Ovary (tissue), 10 donors: ENCODE measurements at regions of chr6 and their contacts with region 1.

Region 1: GRCh38 chr6:41424370-41425058 is 89.1 kb downstream of the NCR2 start:
- DNase-seq: peak; percentile 71 to 89 (median 85)
- H3K4me3 ChIP-seq: no peak overlapping the region
- H3K27ac ChIP-seq: no peak overlapping the region
- H3K4me1 ChIP-seq: peaks cover 14% of the 10 kb centered on the region
- H3K27me3 ChIP-seq: no peaks in the 10 kb centered on the region
- CTCF ChIP-seq: peak; percentile 61 to 74 (median 66)
- EP300 ChIP-seq: no peak
- POLR2A ChIP-seq: no peak

Region 2: DNA sequence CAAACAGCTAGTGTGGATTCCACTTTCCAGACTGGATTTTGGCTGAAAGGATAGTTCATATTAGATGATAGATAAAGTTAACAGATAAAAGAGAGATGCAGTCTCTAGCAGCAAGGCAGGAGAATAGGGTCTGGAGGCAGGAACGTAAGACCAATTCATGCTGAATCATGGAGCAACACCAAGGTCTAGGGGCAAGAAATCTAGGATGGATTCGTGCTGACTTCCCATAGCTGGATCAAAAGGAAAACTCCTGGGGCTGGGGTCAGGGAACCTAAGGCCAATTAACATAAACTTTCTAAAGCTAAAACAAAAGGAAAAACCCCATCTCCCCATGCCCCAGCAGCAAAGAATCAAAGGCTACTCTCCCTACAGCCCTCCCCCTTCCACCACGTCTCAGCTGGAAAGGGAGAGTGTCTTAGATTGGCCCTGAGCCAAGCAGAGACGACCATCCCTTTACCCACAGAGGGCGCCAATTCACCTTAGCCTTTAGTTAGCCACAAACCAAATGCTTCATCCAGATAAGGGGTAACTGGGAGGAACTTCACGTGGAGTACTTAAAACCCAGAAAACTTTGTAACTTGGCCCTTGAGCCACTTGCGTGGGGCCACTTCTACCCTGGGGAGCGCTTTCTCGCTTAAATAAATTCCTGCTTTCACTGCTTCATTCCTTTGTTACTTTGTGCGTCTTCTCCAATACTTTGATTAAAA is 145.7 kb before region 1 on chr6:
- intact Hi-C with region 1: no loop called
- DNase-seq: peak in 2 of 5 donors; percentile 31 to 40
- H3K4me3 ChIP-seq: no peak overlapping the region
- H3K27ac ChIP-seq: no peak overlapping the region
- H3K4me1 ChIP-seq: no peaks in the 10 kb centered on the region
- H3K27me3 ChIP-seq: no peaks in the 10 kb centered on the region
- CTCF ChIP-seq: no peak
- EP300 ChIP-seq: no peak
- POLR2A ChIP-seq: no peak

Region 3: DNA sequence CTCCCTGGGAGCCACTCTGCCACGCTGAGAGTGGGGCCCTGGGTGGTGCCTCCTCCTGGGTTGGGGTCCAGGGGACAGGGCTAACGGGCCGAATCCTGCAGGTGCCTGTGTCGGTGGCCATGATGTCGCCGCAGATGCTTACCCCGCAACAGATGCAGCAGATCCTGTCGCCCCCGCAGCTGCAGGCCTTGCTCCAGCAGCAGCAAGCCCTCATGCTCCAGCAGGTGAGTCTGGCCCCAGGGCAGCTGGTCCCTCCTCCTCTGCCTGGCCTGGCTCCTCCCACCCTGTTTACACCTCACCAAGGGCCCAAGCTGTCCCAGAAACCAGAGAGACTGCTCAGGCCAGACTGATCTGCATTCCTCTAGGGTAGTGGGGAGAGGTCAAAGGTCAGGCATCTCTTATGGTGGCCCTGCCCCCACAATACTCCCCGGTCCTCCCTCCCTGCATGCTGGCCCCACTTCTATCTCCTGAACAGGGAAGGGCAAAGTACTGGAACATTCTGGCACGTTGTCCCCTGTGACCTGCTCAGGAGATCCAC is 160.2 kb after region 1 on chr6:
- intact Hi-C with region 1: loop called in 2 of 4 experiments (anchors 5 kb)
- DNase-seq: no peak
- H3K4me3 ChIP-seq: no peak overlapping the region
- H3K27ac ChIP-seq: no peak overlapping the region
- H3K4me1 ChIP-seq: no peaks in the 10 kb centered on the region
- H3K27me3 ChIP-seq: no peaks in the 10 kb centered on the region
- CTCF ChIP-seq: no peak
- EP300 ChIP-seq: no peak
- POLR2A ChIP-seq: no peak

Region 4: GRCh38 chr6:41675176-41675770 is 250.8 kb after region 1 on chr6:
- intact Hi-C with region 1: loop called in 1 of 4 experiments (anchors 10 kb)
- DNase-seq: no peak
- H3K4me3 ChIP-seq: no peak overlapping the region
- H3K27ac ChIP-seq: no peak overlapping the region
- H3K4me1 ChIP-seq: no peaks in the 10 kb centered on the region
- H3K27me3 ChIP-seq: no peaks in the 10 kb centered on the region
- CTCF ChIP-seq: no peak
- EP300 ChIP-seq: no peak
- POLR2A ChIP-seq: no peak